A549 (cell line): ENCODE measurements at regions of chr19 and their contacts with region 1.

Region 1: DNA sequence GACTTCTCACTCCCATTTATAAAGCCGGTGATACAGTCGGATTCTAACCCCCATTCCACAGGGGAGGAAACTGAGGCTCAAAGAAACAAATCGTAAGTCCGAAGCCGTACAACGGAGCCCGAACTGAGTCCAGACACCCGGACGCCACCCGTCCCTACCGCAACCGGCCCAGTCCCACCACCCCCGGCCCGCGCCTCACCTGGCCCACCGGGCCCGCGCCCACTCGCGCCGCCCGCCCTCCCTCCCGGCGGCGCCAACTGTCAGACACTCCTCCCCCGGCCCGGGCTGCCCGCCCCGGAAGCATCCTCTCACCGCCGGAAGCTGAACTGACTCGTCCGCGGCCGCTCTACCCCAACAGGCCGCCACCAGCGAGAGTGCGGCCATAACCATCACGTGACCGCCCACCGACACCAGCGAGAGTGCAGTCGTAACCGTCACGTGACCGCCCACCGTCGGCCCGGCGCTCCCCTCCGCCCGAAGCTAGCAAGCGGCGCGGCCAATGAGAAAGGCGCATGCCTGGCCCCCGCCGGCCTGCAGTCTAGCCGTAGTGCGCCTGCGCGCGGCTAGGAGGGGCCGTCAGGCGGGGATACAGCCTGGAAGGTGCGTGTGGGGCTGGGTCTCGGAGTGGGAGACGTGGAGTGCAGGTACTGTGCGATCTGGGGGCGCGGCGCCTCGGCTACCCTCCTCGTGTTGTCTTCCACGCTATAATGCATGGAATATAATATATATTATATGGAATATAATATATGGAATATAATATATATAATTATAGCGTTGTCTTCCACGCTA is at the starts of genes C19orf47 and PLD3:
- DNase-seq: peak; percentile 100
- ATAC-seq: peak; percentile 98 to 99
- H3K4me3 ChIP-seq: peak within 1 kb of the TSS; percentile 80
- H3K27ac ChIP-seq: peak within 1 kb of the TSS; percentile 83 to 84
- H3K4me1 ChIP-seq: peaks cover 8% of the 10 kb centered on the region
- CTCF ChIP-seq: no peak
- EP300 ChIP-seq: no peak; a peak in 1 of 5 replicates
- POLR2A ChIP-seq: peak; percentile 99
- RAD21 ChIP-seq: no peak
- polyA plus RNA-seq, gene C19orf47: 32.8 and 39.8 TPM in 2 replicates
- polyA plus RNA-seq, gene PLD3: 290 and 350 TPM in 2 replicates

Region 2: DNA sequence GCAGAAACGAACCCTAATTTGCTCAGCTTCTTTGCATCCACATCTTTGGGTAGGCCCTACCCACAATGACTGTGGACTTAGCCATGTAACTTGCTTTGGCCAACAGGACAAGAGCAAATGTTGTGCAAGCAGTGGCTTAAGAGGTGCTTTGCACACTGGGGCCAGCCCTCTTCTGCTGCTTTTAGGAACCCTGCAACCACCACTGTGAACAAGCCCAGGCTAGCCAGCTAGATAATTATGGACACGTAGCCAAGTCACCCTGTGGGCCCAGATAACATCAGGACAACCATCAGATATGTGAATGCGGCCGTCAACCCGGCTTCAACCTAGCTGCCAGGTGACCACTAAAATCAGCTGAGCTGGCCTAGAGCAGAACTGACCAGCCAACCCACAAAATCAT is 17.2 kb before region 1 on chr19:
- CTCF ChIA-PET with region 1: interaction called, 24 read pairs
- POLR2A ChIA-PET with region 1: interaction called, 5 read pairs
- DNase-seq: no peak
- ATAC-seq: no peak
- H3K4me3 ChIP-seq: no peak overlapping the region
- H3K27ac ChIP-seq: no peak overlapping the region
- H3K4me1 ChIP-seq: no peaks in the 10 kb centered on the region
- CTCF ChIP-seq: no peak
- EP300 ChIP-seq: no peak
- POLR2A ChIP-seq: no peak
- RAD21 ChIP-seq: no peak